AG04449 (cell line): ENCODE measurements at regions of chr9 and their contacts with region 1.

Region 1: DNA sequence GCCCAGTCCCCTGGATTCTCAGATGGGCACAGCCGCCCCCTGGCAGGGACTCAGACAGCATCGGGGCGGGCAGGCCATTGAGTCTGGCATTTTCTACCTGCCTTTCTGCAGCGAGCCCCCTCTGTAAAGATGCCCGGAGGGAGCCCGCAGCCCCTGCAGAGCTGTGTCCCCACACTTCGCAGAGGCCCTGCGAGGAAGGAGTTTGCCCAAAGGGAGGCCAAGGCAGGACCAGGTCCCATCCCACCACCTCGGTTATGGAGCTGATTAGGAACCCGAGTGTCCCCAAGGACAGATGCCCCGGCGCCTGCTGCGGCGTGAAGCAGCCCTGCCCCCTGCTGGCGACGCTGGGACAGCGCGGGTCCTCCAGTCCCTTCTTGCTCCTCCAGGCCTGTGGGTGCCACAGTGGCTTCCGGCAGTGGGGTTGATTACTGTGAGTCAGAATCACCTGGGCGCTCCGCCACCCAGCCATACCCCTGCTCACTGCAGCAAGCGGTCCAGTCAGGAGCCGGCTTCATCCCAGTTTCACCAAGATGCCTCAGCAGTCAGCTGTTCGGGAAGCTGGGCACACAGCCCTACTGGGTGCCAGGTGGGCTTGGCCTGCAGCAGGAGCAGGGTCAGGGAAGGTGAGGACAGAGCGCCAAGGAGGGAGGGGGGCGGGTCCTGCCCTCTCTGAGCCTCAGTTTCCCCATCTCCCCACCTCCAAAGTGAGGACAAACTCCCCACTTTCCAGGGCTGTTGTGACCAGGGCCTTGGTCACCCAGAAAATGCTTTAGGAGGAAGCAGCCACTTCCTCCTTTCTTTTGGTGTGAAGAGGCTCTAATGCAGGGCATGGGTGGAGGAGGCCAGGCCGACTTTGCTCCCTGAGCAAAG is 117.1 kb downstream of the RXRA start:
- DNase-seq: peak; percentile 40
- H3K4me3 ChIP-seq: no peak overlapping the region
- CTCF ChIP-seq: peak; percentile 99

Region 2: GRCh38 chr9:134163353-134164196 is 279.8 kb before region 1 on chr9:
- CTCF ChIA-PET with region 1: interaction called, 256 read pairs
- POLR2A ChIA-PET with region 1: interaction called, 3 read pairs
- DNase-seq: no peak
- H3K4me3 ChIP-seq: peak overlapping the region; percentile 45
- CTCF ChIP-seq: peak; percentile 47

Region 3: DNA sequence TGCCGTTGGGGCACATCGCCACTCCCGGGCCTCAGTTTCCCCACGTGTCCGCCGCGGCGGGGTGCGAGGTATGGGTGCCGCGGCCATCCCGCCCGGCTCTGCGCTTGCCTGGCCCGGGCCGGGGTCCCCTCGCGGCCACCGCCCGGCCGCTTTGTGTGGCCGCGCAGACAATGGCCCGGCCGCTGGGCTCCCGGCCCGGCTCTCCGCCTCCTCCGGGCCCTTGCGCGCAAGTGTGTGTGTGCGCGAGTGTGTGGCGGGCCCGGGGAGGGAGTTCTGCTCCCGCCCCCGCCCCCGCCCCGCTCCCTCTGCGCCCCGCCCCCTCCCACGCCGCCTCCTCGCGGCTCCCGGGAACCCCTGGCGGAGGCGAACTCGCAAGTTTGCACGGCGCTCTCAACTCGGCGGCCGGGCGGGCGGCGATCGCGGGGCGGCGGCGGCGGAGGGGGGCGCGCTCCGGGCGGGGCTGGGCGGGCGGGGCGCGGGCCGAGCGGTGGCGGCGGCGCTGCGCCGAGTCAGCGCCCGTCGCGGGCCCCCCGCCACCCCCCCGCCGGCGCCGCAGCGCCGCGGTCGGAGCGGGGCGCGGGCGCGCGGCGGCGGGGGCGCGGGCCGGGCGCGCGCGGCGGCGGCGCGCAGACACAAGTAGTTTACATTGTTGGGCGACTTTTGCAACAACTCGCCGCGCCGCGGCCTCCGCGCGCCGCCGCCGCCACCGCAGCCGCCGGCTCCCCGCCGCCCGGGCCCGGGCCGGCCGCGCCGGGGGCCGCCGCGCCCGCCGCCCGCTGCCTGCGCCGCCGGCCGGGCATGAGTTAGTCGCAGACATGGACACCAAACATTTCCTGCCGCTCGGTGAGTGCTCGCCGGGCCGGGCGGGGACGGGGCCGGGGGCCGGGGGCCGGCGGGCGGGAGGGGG is 117.3 kb before region 1 on chr9 and contains the start of gene RXRA:
- CTCF ChIA-PET with region 1: interaction called, 13 read pairs
- POLR2A ChIA-PET with region 1: interaction called, 3 read pairs
- DNase-seq: peak; percentile 47
- H3K4me3 ChIP-seq: peak within 1 kb of the TSS; percentile 72
- CTCF ChIP-seq: peak; percentile 72

Region 4: GRCh38 chr9:134422301-134423090 is 20.9 kb before region 1 on chr9:
- CTCF ChIA-PET with region 1: no interaction called
- POLR2A ChIA-PET with region 1: no interaction called
- DNase-seq: no peak
- H3K4me3 ChIP-seq: no peak overlapping the region
- CTCF ChIP-seq: no peak

Region 5: GRCh38 chr9:134469041-134469875 is 25.9 kb after region 1 on chr9:
- CTCF ChIA-PET with region 1: no interaction called
- POLR2A ChIA-PET with region 1: no interaction called
- DNase-seq: no peak
- H3K4me3 ChIP-seq: no peak overlapping the region
- CTCF ChIP-seq: no peak